Aorta (tissue), 5 donors: ENCODE measurements at regions of chr12 and their contacts with region 1.

Region 1: DNA sequence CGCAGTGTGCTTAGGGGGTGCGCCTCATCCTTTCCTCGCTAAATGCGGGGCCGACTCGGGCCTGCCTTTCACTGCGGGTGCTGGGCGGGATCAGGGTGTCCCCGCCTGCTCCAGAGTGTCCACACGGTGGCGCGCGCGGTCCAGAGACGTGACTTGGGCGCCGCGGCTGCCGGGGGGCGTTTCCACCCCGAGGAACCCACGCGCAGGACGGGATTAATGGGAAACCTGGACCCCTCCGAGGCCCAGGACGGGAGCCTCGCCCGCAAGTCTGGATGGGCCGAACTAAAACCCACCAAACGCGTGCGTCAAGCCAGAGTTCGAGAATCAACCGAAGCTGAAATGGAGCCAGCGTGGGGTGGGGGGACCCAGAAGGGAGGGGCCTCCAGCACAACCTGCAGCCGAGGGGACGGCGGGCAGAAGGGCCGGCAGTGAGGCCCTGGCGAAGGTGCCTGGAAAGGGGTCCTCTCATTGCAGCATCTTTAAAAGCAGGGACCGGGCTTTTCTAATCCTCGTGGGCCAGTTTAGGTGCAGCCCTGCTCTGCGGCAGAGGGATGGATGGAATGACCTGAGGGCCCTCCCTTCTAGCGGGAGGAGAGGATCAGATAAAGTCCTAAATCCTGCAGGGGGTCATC is 93.3 kb downstream of the NINJ2 start:
- DNase-seq: peak; percentile 93 to 98
- ATAC-seq: peak; percentile 94
- H3K4me3 ChIP-seq: peak overlapping the region; percentile 30 to 57
- H3K27ac ChIP-seq: peak overlapping the region in 1 of 2 donors; percentile 62
- H3K4me1 ChIP-seq: no peaks in the 10 kb centered on the region
- H3K27me3 ChIP-seq: no peaks in the 10 kb centered on the region

Region 2: DNA sequence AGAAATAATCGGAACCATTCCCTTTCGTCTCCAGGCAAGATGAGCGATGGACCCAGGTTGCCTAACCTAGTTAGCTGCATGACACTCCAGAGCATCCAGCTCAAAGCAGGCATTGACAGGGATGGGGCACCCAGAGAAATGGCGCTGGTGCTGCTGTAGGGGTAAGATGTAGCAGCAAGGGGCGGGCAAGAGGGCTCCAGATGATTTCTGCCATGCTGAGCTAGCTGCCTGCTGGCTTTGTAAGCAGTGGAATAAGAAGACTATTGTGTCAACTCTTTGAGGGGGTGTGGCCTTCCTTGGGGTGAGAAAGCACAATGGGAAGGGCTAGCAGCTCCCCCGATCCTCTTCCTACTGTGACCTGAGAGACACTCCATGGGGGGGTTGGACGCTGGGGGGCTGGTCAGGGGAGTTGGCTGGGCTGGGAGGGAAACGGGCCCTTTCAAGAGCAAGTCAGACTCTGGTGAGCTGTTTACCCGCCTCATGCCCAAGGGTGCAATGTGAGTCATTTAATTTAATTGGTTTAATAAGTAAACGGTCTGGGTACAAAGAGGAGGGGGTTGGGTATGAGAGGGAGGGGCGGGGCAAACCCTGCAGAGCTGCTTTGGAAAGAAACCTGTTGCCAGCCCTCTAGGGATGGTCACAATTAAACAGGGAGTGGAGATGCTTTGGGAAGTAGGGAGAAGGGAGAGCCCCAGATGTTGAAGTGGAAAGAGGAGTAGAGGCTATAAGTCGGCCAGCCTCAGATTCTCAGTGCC is 59.7 kb before region 1 on chr12:
- intact Hi-C with region 1: no loop called
- DNase-seq: no peak
- ATAC-seq: no peak
- H3K4me3 ChIP-seq: no peak overlapping the region
- H3K27ac ChIP-seq: no peak overlapping the region
- H3K4me1 ChIP-seq: no peaks in the 10 kb centered on the region
- H3K27me3 ChIP-seq: no peaks in the 10 kb centered on the region

Region 3: GRCh38 chr12:810671-811415 is 240.9 kb after region 1 on chr12:
- intact Hi-C with region 1: loop called (anchors 2 to 5 kb)
- DNase-seq: no peak
- ATAC-seq: no peak
- H3K4me3 ChIP-seq: no peak overlapping the region
- H3K27ac ChIP-seq: no peak overlapping the region
- H3K4me1 ChIP-seq: no peaks in the 10 kb centered on the region
- H3K27me3 ChIP-seq: no peaks in the 10 kb centered on the region

Region 4: DNA sequence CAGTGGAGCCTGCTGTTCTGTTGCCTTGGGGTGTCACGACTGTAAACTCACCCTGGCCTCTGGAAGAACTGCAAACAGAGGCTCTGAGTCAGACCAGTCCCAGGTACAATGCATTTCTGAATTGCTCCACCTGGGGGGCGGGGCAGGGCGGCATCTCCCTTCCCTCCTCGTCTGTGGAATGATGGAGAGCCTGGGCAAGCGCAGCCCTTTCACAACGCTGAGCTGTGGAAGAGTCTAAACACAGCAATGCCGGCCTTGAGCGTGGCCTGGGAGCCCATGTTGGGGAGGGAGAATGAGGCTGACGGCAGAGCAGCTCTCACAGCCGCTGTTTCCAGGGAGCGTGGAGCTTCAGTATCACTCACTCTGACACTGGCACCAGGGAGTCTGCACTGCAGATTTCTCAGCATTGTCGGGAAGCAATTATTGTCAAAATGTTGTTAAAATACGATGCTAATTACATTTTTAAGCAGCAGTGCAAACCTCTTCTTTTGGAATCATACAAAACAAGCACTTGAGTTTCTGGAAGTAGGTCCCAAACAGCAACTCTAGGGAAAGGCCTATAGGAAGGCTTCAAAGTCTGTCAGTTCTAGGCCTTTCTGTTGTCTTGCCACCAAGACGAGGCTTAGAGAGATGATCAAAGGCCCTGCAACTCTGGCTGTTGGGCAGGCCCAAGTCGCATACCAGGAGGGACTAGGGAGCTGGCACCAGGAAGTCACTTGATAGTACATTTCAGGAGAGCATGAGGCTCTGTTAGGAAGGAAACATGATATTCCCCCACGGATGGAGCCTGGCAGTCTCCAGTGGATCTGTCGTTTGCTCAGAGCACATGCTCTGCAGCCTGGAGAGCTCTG is 1980.9 kb after region 1 on chr12:
- intact Hi-C with region 1: no loop called
- DNase-seq: no peak
- ATAC-seq: no peak
- H3K4me3 ChIP-seq: no peak overlapping the region
- H3K27ac ChIP-seq: no peak overlapping the region
- H3K4me1 ChIP-seq: no peaks in the 10 kb centered on the region
- H3K27me3 ChIP-seq: no peaks in the 10 kb centered on the region